A549 (cell line): ENCODE measurements at regions of chr22 and their contacts with region 1.

Region 1: GRCh38 chr22:35430897-35431322 is 31.0 kb downstream of the MCM5 start:
- DNase-seq: peak; percentile 75 to 82
- ATAC-seq: peak; percentile 93 to 97
- H3K4me3 ChIP-seq: no peak overlapping the region
- H3K27ac ChIP-seq: peak overlapping the region; percentile 68 to 85
- H3K4me1 ChIP-seq: peaks cover 23% of the 10 kb centered on the region
- CTCF ChIP-seq: peak; percentile 77
- EP300 ChIP-seq: no peak
- POLR2A ChIP-seq: no peak
- RAD21 ChIP-seq: peak; percentile 85 to 92

Region 2: DNA sequence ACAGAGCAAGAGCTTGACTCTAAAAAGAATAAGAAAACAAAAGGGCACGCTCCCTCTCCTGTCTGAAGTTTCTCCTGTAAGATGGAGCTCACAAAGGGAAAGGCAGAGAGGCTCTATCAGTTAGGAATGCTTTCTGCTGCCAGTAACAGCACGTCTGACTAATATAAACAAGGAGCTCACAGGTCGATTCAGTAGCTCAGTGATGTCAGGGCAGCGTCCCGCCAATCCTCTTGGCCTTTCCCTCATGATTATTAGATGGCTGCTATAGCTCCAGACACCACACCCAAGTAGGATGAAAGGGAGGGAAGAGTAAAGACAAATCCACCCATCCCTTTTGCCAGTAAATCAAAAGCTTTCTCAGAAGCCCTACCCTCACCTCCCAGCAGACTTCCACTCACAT is 224.9 kb before region 1 on chr22:
- CTCF ChIA-PET with region 1: no interaction called
- POLR2A ChIA-PET with region 1: no interaction called
- DNase-seq: no peak
- ATAC-seq: peak in 1 of 2 experiments; percentile 36; a peak in 2 of 6 replicates
- H3K4me3 ChIP-seq: no peak overlapping the region
- H3K27ac ChIP-seq: no peak overlapping the region
- H3K4me1 ChIP-seq: no peaks in the 10 kb centered on the region
- CTCF ChIP-seq: no peak
- EP300 ChIP-seq: no peak
- POLR2A ChIP-seq: no peak
- RAD21 ChIP-seq: no peak

Region 3: GRCh38 chr22:35350539-35351503 is 80.1 kb before region 1 on chr22:
- CTCF ChIA-PET with region 1: interaction called, 23 read pairs
- POLR2A ChIA-PET with region 1: no interaction called
- DNase-seq: peak; percentile 85 to 91
- ATAC-seq: peak; percentile 81 to 93
- H3K4me3 ChIP-seq: peak overlapping the region; percentile 49
- H3K27ac ChIP-seq: peak overlapping the region; percentile 95 to 98
- H3K4me1 ChIP-seq: peaks cover 29% of the 10 kb centered on the region
- CTCF ChIP-seq: peak; percentile 74
- EP300 ChIP-seq: no peak
- POLR2A ChIP-seq: peak; percentile 57
- RAD21 ChIP-seq: peak; percentile 91 to 95

Region 4: DNA sequence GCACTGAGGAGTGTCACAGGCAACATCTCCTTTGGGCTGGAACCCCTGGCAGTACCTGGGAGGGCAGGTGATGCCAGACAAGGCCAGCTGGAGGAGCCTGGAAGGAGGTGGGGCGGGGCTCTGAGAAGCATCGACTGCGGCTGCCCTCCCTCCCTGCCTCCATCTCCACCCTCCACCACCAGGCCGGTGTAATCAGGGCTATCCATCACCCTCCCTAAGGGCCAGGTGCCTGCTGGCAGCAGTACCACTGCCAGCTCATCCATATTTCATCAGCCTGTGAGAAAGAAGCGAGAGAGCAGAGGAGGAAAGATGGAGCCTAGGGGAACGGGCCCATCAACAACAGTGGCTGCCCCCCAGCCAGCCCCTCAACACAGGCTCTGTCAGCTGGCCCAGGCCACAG is 58.3 kb after region 1 on chr22:
- CTCF ChIA-PET with region 1: interaction called, 17 read pairs
- POLR2A ChIA-PET with region 1: no interaction called
- DNase-seq: no peak
- ATAC-seq: peak in 1 of 2 experiments; percentile 36; a peak in 2 of 6 replicates
- H3K4me3 ChIP-seq: no peak overlapping the region
- H3K27ac ChIP-seq: peak overlapping the region in 1 of 2 experiments; percentile 38; a peak in 2 of 6 replicates
- H3K4me1 ChIP-seq: no peaks in the 10 kb centered on the region
- CTCF ChIP-seq: no peak
- EP300 ChIP-seq: no peak
- POLR2A ChIP-seq: no peak
- RAD21 ChIP-seq: no peak

Region 5: GRCh38 chr22:35582861-35583670 is 152.2 kb after region 1 on chr22:
- CTCF ChIA-PET with region 1: interaction called, 121 read pairs
- POLR2A ChIA-PET with region 1: interaction called, 4 read pairs
- DNase-seq: peak; percentile 73 to 86
- ATAC-seq: peak; percentile 90 to 91
- H3K4me3 ChIP-seq: no peak overlapping the region
- H3K27ac ChIP-seq: peak overlapping the region; percentile 72 to 78
- H3K4me1 ChIP-seq: peaks cover 33% of the 10 kb centered on the region
- CTCF ChIP-seq: peak; percentile 85
- EP300 ChIP-seq: no peak
- POLR2A ChIP-seq: no peak
- RAD21 ChIP-seq: peak; percentile 90 to 91

Region 6: GRCh38 chr22:35622191-35622913 is 191.4 kb after region 1 on chr22:
- CTCF ChIA-PET with region 1: interaction called, 22 read pairs
- POLR2A ChIA-PET with region 1: no interaction called
- DNase-seq: peak in 1 of 2 experiments; percentile 75
- ATAC-seq: peak; percentile 38 to 58
- H3K4me3 ChIP-seq: 0 out of 3 replicates have a peak overlapping the region, but pooled peaks have one; percentile 0
- H3K27ac ChIP-seq: peak overlapping the region; percentile 83 to 99
- H3K4me1 ChIP-seq: peaks cover 40% of the 10 kb centered on the region
- CTCF ChIP-seq: no peak
- EP300 ChIP-seq: no peak; a peak in 1 of 5 replicates
- POLR2A ChIP-seq: no peak
- RAD21 ChIP-seq: no peak; a peak in 1 of 5 replicates

Region 7: DNA sequence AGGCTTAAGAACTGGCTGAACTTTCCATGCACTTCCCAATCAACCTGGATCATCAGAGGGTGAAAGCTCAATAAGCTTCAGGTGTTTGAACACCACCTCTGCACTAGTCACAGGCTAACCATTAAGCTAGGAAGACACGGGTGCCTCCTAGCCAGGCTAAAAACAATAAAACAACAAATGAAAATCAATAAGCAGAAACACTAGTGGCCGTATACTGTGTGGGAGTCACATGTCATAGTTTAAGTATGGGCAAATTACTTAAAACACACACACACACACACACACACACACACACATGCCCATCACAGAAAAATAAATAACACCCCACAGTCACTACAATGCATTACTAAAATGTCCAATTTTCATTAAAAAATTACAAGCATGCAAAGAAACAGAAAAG is 372.0 kb after region 1 on chr22:
- CTCF ChIA-PET with region 1: no interaction called
- POLR2A ChIA-PET with region 1: no interaction called
- DNase-seq: no peak
- ATAC-seq: no peak
- H3K4me3 ChIP-seq: no peak overlapping the region
- H3K27ac ChIP-seq: no peak overlapping the region; a peak in 1 of 6 replicates
- H3K4me1 ChIP-seq: peaks cover 17% of the 10 kb centered on the region
- CTCF ChIP-seq: no peak
- EP300 ChIP-seq: no peak
- POLR2A ChIP-seq: no peak
- RAD21 ChIP-seq: no peak

Region 8: DNA sequence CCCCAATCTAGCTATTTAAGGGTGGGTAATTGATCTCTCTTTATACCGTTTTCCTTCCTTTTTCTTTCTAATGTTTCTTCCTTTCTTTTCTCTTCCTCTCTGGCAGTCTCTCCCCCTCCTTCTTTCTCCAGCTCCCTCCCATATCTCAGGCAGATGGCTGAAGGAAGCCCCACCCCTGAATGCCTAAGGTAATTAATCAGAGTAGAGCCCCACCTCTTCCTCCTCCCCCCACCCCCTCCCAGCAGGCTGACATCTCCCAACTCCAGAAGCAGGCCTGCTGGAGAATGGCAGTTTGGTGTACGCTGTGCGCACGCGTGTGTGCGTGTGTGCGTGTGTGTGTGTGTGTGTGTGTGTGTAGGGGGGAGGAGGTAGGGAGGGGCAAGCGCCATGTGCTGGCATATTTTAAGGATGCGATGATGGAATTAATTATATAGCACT is 409.4 kb after region 1 on chr22:
- CTCF ChIA-PET with region 1: interaction called, 10 read pairs
- POLR2A ChIA-PET with region 1: no interaction called
- DNase-seq: peak; percentile 62 to 97
- ATAC-seq: peak; percentile 84 to 88
- H3K4me3 ChIP-seq: peak overlapping the region; percentile 69
- H3K27ac ChIP-seq: peak overlapping the region; percentile 79 to 90
- H3K4me1 ChIP-seq: peaks cover 52% of the 10 kb centered on the region
- CTCF ChIP-seq: no peak
- EP300 ChIP-seq: no peak
- POLR2A ChIP-seq: no peak
- RAD21 ChIP-seq: 0 out of 5 replicates have a peak, but pooled peaks of 1 of the 2 experiments have one; percentile 16